Breast epithelium (tissue), 4 donors: ENCODE measurements at regions of chr1 and their contacts with region 1.

Region 1: DNA sequence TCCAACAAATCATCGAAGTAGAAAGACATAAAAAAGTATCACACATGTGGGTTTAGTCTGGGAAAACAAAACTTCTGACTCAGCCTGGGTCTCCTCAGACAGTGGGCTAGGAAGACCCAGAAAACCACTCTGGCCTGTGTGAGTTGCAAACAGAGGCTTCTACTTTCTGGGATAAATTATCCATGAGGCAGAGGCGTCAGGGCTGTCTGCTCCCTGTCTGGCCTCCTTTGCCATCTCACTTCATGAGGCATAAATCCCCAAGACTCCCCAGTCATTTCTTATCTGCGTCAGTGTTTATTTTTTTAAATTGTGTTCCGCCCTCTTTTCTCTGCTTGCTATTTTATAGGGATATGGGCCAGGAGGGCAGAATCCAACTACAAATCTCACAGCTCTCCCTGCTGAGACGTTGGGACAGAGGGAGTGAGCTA is 80.6 kb upstream of the TRABD2B start:
- DNase-seq: no peak
- H3K4me3 ChIP-seq: no peak overlapping the region
- H3K27ac ChIP-seq: no peak overlapping the region
- H3K4me1 ChIP-seq: no peaks in the 10 kb centered on the region
- H3K27me3 ChIP-seq: no peaks in the 10 kb centered on the region
- CTCF ChIP-seq: no peak
- POLR2A ChIP-seq: no peak

Region 2: GRCh38 chr1:47875831-47876586 is 201.8 kb before region 1 on chr1:
- intact Hi-C with region 1: no loop called
- DNase-seq: no peak
- H3K4me3 ChIP-seq: no peak overlapping the region
- H3K27ac ChIP-seq: no peak overlapping the region
- H3K4me1 ChIP-seq: no peaks in the 10 kb centered on the region
- H3K27me3 ChIP-seq: no peaks in the 10 kb centered on the region
- CTCF ChIP-seq: no peak
- POLR2A ChIP-seq: no peak

Region 3: GRCh38 chr1:48810740-48811139 is 732.9 kb after region 1 on chr1:
- intact Hi-C with region 1: loop called (anchors 5 kb)
- DNase-seq: no peak
- H3K4me3 ChIP-seq: no peak overlapping the region
- H3K27ac ChIP-seq: no peak overlapping the region
- H3K4me1 ChIP-seq: no peaks in the 10 kb centered on the region
- H3K27me3 ChIP-seq: no peaks in the 10 kb centered on the region
- CTCF ChIP-seq: no peak
- POLR2A ChIP-seq: no peak

Region 4: GRCh38 chr1:49016030-49016977 is 938.5 kb after region 1 on chr1:
- intact Hi-C with region 1: no loop called
- DNase-seq: no peak
- H3K4me3 ChIP-seq: no peak overlapping the region
- H3K27ac ChIP-seq: no peak overlapping the region
- H3K4me1 ChIP-seq: no peaks in the 10 kb centered on the region
- H3K27me3 ChIP-seq: no peaks in the 10 kb centered on the region
- CTCF ChIP-seq: no peak
- POLR2A ChIP-seq: no peak

Region 5: GRCh38 chr1:49102752-49103151 is 1024.9 kb after region 1 on chr1:
- intact Hi-C with region 1: no loop called
- DNase-seq: no peak
- H3K4me3 ChIP-seq: no peak overlapping the region
- H3K27ac ChIP-seq: no peak overlapping the region
- H3K4me1 ChIP-seq: no peaks in the 10 kb centered on the region
- H3K27me3 ChIP-seq: no peaks in the 10 kb centered on the region
- CTCF ChIP-seq: no peak
- POLR2A ChIP-seq: no peak